ENCODE measurements at regions of chr2 and their contacts with region 1.

Region 1: DNA sequence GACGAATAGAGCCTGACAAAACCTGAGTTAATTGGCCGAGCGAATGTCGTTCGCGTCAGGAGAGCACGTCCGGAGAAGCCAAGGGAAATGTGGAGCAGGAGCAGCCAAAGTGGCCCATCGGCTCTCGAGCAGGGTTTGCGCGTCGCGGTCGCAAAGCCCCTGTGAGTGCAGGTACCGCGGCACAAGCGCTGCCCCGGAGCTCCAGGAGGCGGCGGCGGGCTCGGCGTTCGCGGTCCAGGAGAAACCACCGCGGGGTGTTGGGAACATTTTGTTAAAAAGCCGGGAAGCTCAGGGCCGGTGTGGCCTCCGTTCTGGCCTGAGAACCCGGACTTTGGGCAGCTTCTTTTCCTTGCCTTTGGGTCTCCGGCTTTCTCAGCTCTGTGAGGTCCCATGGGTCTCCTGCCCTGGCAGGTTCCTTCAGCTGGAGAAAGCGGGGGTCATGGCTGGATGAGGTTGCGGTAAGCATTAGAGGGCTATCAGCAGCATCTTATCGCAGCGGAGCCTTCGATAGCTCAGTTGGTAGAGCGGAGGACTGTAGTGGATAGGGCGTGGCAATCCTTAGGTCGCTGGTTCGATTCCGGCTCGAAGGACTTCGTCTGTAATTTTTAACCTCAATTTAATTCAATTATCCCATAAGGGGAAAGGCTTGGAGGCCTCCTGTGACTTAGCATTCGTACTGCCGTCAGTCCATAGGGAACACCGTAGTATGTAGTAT is 1.0 kb upstream of the AGBL5 start:
- DNase-seq: peak; percentile 85 to 97 (median 93)
- ATAC-seq: peak; percentile 64
- H3K4me3 ChIP-seq: peak overlapping the region; percentile 78 to 83
- H3K4me3 Mint-ChIP-seq: peak overlapping the region; percentile 99
- H3K27ac ChIP-seq: peak overlapping the region; percentile 74 to 88
- H3K27ac Mint-ChIP-seq: peak overlapping the region; percentile 99
- H3K4me1 ChIP-seq: peaks cover 10% of the 10 kb centered on the region
- H3K4me1 Mint-ChIP-seq: peaks cover 9% of the 10 kb centered on the region
- H3K27me3 ChIP-seq: no peaks in the 10 kb centered on the region
- H3K27me3 Mint-ChIP-seq: peaks cover 2% of the 10 kb centered on the region
- CTCF ChIP-seq: peak; percentile 28

Region 2: GRCh38 chr2:25982273-25982967 is 1068.0 kb before region 1 on chr2 and contains the start of gene KIF3C:
- CTCF ChIA-PET with region 1: no interaction called
- POLR2A ChIA-PET with region 1: no interaction called
- intact Hi-C with region 1: loop called in 1 of 2 experiments (anchors 10 kb)
- DNase-seq: peak; percentile 46 to 84 (median 76)
- ATAC-seq: peak; percentile 92
- H3K4me3 ChIP-seq: peak within 1 kb of the TSS; percentile 61 to 81
- H3K4me3 Mint-ChIP-seq: peak within 1 kb of the TSS; percentile 88
- H3K27ac ChIP-seq: peak within 1 kb of the TSS; percentile 26 to 28
- H3K27ac Mint-ChIP-seq: peak within 1 kb of the TSS; percentile 79
- H3K4me1 ChIP-seq: peaks cover 11% of the 10 kb centered on the region
- H3K4me1 Mint-ChIP-seq: peaks cover 17% of the 10 kb centered on the region
- H3K27me3 ChIP-seq: no peaks in the 10 kb centered on the region
- H3K27me3 Mint-ChIP-seq: no peaks in the 10 kb centered on the region
- CTCF ChIP-seq: no peak
- total RNA-seq, gene KIF3C: 1.5 to 2.3 TPM

Region 3: DNA sequence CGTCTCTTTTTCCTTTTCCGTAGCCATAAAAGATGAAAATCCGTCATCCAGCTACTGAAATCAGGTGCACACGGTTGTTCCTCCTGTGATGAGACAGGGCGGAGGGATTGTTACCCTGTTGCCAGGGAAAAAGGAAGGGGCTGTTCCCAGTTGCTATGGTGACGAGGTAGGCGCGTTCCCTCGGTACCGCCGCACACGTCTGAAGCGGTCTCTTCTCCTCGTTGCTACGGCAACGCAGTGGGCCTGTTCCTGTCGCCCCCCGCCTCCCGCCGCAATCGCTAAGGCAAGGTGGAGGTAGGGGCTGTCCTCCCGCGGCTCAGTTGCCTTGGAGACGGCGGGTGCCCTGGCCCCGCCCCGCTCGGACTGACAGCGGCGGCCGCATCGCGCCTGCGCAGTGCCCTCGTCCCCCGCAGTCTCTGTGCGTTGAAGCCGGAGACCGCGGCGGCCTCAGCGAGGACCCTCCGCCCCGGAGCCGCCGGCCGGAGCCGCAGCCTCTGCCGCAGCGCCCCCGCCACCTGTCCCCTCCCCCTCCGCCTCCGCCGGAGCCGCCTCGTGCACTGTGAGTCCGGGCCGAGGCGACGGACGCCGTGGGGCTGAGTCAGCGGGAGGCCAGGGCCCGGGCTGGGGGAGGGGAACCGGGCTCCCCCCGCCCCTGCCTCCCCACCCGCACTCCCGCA is 80.1 kb before region 1 on chr2 and contains the start of gene MAPRE3:
- CTCF ChIA-PET with region 1: no interaction called
- POLR2A ChIA-PET with region 1: no interaction called
- intact Hi-C with region 1: loop called in 1 of 2 experiments (anchors 1 kb)
- DNase-seq: peak; percentile 60 to 95 (median 84)
- ATAC-seq: peak; percentile 85
- H3K4me3 ChIP-seq: peak within 1 kb of the TSS; percentile 58 to 65
- H3K4me3 Mint-ChIP-seq: peak within 1 kb of the TSS; percentile 83
- H3K27ac ChIP-seq: peak within 1 kb of the TSS in 1 of 2 experiments; percentile 49
- H3K27ac Mint-ChIP-seq: peak within 1 kb of the TSS; percentile 37
- H3K4me1 ChIP-seq: peaks cover 9% of the 10 kb centered on the region
- H3K4me1 Mint-ChIP-seq: peaks cover 25% of the 10 kb centered on the region
- H3K27me3 ChIP-seq: no peaks in the 10 kb centered on the region
- H3K27me3 Mint-ChIP-seq: peaks cover 19% of the 10 kb centered on the region
- CTCF ChIP-seq: no peak
- total RNA-seq, gene MAPRE3: 2.6 to 3.8 TPM

Region 4: DNA sequence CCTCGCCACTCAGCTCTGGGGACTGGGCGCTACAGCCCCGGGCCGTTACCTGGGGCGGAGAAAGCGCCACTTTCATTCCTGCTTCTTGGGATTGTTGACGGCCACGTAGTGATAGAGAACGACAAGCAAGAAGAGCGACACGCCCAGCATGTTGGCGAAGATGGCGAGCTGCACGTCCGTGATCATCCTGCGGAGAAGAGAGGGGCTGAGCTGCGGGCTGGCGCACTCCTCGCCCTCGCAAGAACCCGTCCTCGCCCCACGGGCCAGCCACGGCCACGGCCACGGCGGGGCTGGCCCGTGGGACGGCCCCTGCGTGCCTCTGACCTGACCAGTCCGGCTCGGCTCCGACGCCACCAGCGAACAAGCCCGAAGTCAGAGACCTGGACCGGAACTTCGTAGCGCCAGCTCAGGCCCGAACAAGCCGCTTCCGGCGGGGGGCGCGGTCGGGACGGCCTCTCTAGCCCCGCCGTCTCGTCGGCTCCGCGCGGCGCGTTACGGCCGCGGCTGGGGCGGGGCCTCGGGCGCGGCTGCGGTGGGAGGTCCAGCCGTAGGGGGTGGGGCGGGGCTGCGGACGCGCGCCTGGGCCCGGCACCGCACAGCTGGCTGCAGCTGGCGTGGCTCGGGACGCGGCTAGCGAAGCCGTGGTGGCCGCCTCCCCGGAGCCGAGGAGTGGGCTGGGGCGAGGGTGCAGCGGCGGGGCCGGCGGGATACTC is 21.0 kb after region 1 on chr2 and contains the start of gene OST4:
- CTCF ChIA-PET with region 1: interaction called, 14 read pairs
- POLR2A ChIA-PET with region 1: interaction called, 103 read pairs
- intact Hi-C with region 1: loop called (anchors 1 kb)
- DNase-seq: peak; percentile 74 to 94 (median 88)
- ATAC-seq: peak; percentile 88
- H3K4me3 ChIP-seq: peak within 1 kb of the TSS; percentile 84 to 93
- H3K4me3 Mint-ChIP-seq: peak within 1 kb of the TSS; percentile 98
- H3K27ac ChIP-seq: peak within 1 kb of the TSS; percentile 92 to 98
- H3K27ac Mint-ChIP-seq: peak within 1 kb of the TSS; percentile 98
- H3K4me1 ChIP-seq: peaks cover 46% of the 10 kb centered on the region
- H3K4me1 Mint-ChIP-seq: peaks cover 76% of the 10 kb centered on the region
- H3K27me3 ChIP-seq: no peaks in the 10 kb centered on the region
- H3K27me3 Mint-ChIP-seq: no peaks in the 10 kb centered on the region
- CTCF ChIP-seq: no peak
- total RNA-seq, gene OST4: 252 to 260 TPM

Region 5: GRCh38 chr2:27079233-27080139 is 29.0 kb after region 1 on chr2:
- CTCF ChIA-PET with region 1: interaction called, 6 read pairs
- POLR2A ChIA-PET with region 1: interaction called, 103 read pairs
- intact Hi-C with region 1: loop called in 1 of 2 experiments (anchors 1 kb)
- DNase-seq: no peak
- ATAC-seq: no peak
- H3K4me3 ChIP-seq: no peak overlapping the region
- H3K4me3 Mint-ChIP-seq: no peak overlapping the region
- H3K27ac ChIP-seq: no peak overlapping the region
- H3K27ac Mint-ChIP-seq: no peak overlapping the region
- H3K4me1 ChIP-seq: peaks cover 37% of the 10 kb centered on the region
- H3K4me1 Mint-ChIP-seq: peaks cover 34% of the 10 kb centered on the region
- H3K27me3 ChIP-seq: no peaks in the 10 kb centered on the region
- H3K27me3 Mint-ChIP-seq: no peaks in the 10 kb centered on the region
- CTCF ChIP-seq: no peak

Region 6: DNA sequence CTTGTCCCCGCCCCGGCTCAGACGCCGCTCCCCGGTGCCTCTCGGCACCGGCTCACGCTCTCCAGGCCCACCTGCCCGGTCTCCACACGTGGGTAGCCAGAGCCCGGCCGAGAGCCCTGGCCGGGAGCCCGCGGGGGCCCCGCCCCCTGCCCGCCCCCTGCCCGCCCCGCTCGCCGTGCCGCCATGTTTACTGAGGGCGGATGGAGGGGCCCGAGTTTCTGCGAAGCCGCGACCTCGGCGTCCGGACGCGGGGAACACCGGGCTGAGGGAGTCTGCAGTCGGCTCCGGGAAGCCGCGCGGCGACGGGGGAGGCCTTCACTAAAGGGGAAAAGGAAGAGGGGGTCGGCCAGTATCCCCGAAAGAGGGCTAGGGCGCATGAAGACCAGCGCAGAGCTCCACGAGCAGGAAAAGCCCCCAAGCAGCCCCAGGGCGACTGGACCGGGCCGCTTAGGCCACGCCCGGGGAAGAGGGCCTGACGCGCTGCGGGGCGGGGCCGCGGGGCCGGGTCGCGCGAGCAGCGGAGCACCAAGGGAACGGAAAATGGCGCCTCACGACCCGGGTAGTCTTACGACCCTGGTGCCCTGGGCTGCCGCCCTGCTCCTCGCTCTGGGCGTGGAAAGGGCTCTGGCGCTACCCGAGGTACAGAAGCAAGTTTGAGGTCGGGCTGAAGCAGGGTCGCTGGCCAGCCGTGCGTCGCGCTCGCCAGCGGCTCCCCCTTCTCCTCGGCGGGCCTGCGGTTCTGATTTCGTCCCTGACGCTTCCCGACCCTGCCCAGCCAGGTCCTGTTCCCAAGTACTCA is 161.6 kb after region 1 on chr2 and contains the starts of genes ATRAID and SLC5A6:
- CTCF ChIA-PET with region 1: no interaction called
- POLR2A ChIA-PET with region 1: interaction called, 7 read pairs
- intact Hi-C with region 1: loop called (anchors 1 kb)
- DNase-seq: peak; percentile 78 to 94 (median 87)
- ATAC-seq: peak; percentile 84
- H3K4me3 ChIP-seq: peak within 1 kb of the TSS; percentile 67 to 99
- H3K4me3 Mint-ChIP-seq: peak within 1 kb of the TSS; percentile 100
- H3K27ac ChIP-seq: peak within 1 kb of the TSS; percentile 97 to 100
- H3K27ac Mint-ChIP-seq: peak within 1 kb of the TSS; percentile 100
- H3K4me1 ChIP-seq: peaks cover 26% of the 10 kb centered on the region
- H3K4me1 Mint-ChIP-seq: peaks cover 44% of the 10 kb centered on the region
- H3K27me3 ChIP-seq: no peaks in the 10 kb centered on the region
- H3K27me3 Mint-ChIP-seq: no peaks in the 10 kb centered on the region
- CTCF ChIP-seq: no peak
- total RNA-seq, gene ATRAID: 70.0 to 71.7 TPM
- total RNA-seq, gene SLC5A6: 410 to 431 TPM

Measured in CD8-positive, alpha-beta T cell (primary cell).